ENCODE measurements at regions of chr14 and their contacts with region 1.

Region 1: DNA sequence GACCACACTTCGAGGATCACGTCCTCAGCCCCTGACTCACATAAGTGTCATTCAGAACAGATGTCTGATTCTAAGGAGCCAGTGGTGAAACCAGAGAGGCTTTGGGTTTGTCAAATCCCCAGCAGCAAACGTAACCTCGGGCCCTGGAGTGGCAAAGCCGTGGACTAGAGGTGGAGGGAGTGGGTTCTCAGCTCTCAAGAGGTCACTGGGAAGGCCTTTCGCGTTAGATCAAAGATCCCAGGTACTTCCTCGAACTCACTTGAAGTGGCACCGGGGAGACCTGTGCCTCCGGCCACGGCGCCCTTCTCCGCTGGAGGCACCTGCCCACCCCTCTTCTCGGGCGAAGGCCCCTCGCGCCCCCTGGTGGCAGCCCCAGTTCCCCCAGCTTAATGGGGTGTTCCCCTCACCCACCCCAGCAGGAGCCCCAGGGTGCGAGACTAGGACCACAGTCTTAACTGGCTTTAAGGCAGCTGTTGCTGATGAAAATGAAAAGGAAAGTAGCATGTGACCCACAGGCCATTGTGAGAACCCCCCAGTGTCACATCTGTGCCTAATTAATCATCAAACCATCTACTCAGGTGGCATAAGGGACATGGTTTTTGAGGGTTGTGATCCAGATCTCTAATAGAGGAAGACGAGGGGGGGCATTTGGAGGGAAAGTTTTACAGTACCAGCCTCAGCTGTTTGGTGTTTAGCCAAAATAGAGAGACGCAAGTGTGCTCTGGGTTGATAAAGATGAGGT is 672 bp upstream of the ESR2 start:
- DNase-seq: peak; percentile 50
- ATAC-seq: peak; percentile 96
- H3K4me3 ChIP-seq: peak overlapping the region; percentile 59
- H3K27ac ChIP-seq: no peak overlapping the region; the same call in 1 of the 2 replicates
- H3K4me1 ChIP-seq: peaks cover 16% of the 10 kb centered on the region
- H3K27me3 ChIP-seq: no peaks in the 10 kb centered on the region; a peak in 1 of 4 replicates
- CTCF ChIP-seq: peak; percentile 92 to 99 (median 94)
- EP300 ChIP-seq: peak; percentile 9 to 53; a peak in 1 of 4 replicates
- POLR2A ChIP-seq: peak; percentile 26; the same call in 1 of the 2 replicates
- RAD21 ChIP-seq: peak; percentile 92

Region 2: GRCh38 chr14:63800651-63801375 is 494.0 kb before region 1 on chr14:
- CTCF ChIA-PET with region 1: interaction called, 74 read pairs
- POLR2A ChIA-PET with region 1: no interaction called
- RAD21 ChIA-PET with region 1: interaction called, 30 read pairs
- SMC1A ChIA-PET with region 1: interaction called, 21 read pairs
- in situ Hi-C with region 1: loop called (anchors 5 kb)
- intact Hi-C with region 1: loop called (anchors 1 kb)
- DNase-seq: no peak
- ATAC-seq: no peak
- H3K4me3 ChIP-seq: no peak overlapping the region
- H3K27ac ChIP-seq: no peak overlapping the region
- H3K4me1 ChIP-seq: no peaks in the 10 kb centered on the region
- H3K27me3 ChIP-seq: no peaks in the 10 kb centered on the region
- CTCF ChIP-seq: no peak
- EP300 ChIP-seq: no peak
- POLR2A ChIP-seq: no peak
- RAD21 ChIP-seq: no peak

Region 3: DNA sequence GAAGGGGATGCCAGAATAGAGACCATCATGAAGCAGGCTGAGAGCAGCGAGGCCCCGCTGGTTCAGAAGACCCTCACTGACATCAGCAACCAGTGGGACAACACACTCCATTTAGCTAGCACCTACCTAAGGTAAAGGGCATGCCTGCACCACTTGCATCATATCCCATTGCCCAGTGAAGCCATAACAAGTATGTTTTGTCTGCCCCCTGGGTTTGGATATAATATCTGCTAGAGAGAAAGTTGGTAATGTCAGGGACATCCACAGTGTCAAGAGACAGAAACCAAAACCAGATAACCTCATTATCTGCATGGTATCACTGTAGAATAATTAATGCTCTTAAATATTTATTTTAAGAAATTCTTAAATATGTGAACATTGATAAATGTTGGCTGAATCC is 268.2 kb before region 1 on chr14:
- CTCF ChIA-PET with region 1: interaction called, 5 read pairs
- POLR2A ChIA-PET with region 1: no interaction called
- RAD21 ChIA-PET with region 1: interaction called, 3 read pairs
- SMC1A ChIA-PET with region 1: interaction called, 3 read pairs
- in situ Hi-C with region 1: no loop called
- intact Hi-C with region 1: loop called (anchors 5 kb)
- DNase-seq: no peak
- ATAC-seq: 0 out of 3 replicates have a peak, but pooled peaks have one; percentile 24
- H3K4me3 ChIP-seq: no peak overlapping the region
- H3K27ac ChIP-seq: no peak overlapping the region
- H3K4me1 ChIP-seq: no peaks in the 10 kb centered on the region
- H3K27me3 ChIP-seq: no peaks in the 10 kb centered on the region
- CTCF ChIP-seq: peak in 1 of 3 experiments; percentile 16; a peak in 1 of 6 replicates
- EP300 ChIP-seq: no peak
- POLR2A ChIP-seq: no peak
- RAD21 ChIP-seq: no peak

Region 4: GRCh38 chr14:64137657-64138290 is 157.1 kb before region 1 on chr14:
- CTCF ChIA-PET with region 1: interaction called, 93 read pairs
- POLR2A ChIA-PET with region 1: no interaction called
- RAD21 ChIA-PET with region 1: interaction called, 36 read pairs
- SMC1A ChIA-PET with region 1: interaction called, 55 read pairs
- in situ Hi-C with region 1: no loop called
- intact Hi-C with region 1: loop called (anchors 2 kb)
- DNase-seq: no peak
- ATAC-seq: peak; percentile 36; the same call in 1 of the 3 replicates
- H3K4me3 ChIP-seq: no peak overlapping the region
- H3K27ac ChIP-seq: no peak overlapping the region
- H3K4me1 ChIP-seq: no peaks in the 10 kb centered on the region
- H3K27me3 ChIP-seq: no peaks in the 10 kb centered on the region
- CTCF ChIP-seq: peak; percentile 22 to 37 (median 32); a peak in 3 of 6 replicates
- EP300 ChIP-seq: no peak
- POLR2A ChIP-seq: no peak
- RAD21 ChIP-seq: peak; percentile 51

Region 5: GRCh38 chr14:64232095-64232838 is 62.6 kb before region 1 on chr14:
- CTCF ChIA-PET with region 1: interaction called, 17 read pairs
- POLR2A ChIA-PET with region 1: interaction called, 8 read pairs
- RAD21 ChIA-PET with region 1: interaction called, 12 read pairs
- SMC1A ChIA-PET with region 1: interaction called, 34 read pairs
- in situ Hi-C with region 1: no loop called
- intact Hi-C with region 1: loop called (anchors 1 kb)
- DNase-seq: peak; percentile 88
- ATAC-seq: peak; percentile 70
- H3K4me3 ChIP-seq: no peak overlapping the region; the same call in 1 of the 2 replicates
- H3K27ac ChIP-seq: peak overlapping the region; percentile 46
- H3K4me1 ChIP-seq: peaks cover 52% of the 10 kb centered on the region
- H3K27me3 ChIP-seq: no peaks in the 10 kb centered on the region
- CTCF ChIP-seq: no peak
- EP300 ChIP-seq: peak; percentile 83 to 90; a peak in 3 of 4 replicates
- POLR2A ChIP-seq: no peak
- RAD21 ChIP-seq: no peak

Measured in GM12878 (cell line).